ENCODE measurements at regions of chr14 and their contacts with region 1.

Region 1: DNA sequence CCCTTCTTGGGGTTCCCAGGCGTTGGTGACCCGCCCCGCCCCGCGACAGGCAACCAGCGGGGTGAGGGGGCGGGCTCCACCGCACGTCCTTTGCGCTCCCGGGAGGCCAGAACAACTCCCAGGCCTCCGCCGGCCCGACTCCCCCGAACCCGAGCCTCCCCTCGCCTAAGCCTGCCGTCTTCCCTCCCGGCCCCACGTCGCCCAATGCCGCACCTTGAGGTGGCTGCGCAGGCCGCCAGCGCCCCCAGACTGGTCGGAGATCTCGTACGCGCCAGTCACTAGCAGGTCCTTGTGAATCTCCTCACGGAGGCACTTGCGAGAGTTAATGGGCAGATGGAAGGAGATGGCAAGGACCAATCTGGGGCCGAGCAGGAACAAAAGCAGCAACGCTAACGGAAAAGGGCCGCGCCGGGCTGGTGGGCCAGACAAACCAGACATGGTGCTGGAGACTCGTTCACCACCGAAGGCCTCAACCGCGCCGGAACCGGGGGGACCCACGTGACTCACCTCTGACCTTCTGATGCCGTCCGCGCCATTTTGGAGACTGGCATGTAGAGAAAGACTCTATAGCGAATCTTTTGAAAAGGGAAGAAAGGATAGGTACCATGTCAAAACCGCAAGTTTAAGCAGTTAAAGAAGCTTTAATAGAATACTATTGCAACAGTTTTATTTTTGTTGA is at the start of gene TMED10:
- DNase-seq: peak; percentile 85 to 95 (median 93)
- ATAC-seq: peak; percentile 76
- H3K4me3 ChIP-seq: peak within 1 kb of the TSS; percentile 80 to 94
- H3K4me3 Mint-ChIP-seq: peak within 1 kb of the TSS; percentile 91
- H3K27ac ChIP-seq: peak within 1 kb of the TSS; percentile 98
- H3K27ac Mint-ChIP-seq: peak within 1 kb of the TSS; percentile 98
- H3K4me1 ChIP-seq: peaks cover 23% of the 10 kb centered on the region
- H3K4me1 Mint-ChIP-seq: peaks cover 44% of the 10 kb centered on the region
- H3K27me3 ChIP-seq: no peaks in the 10 kb centered on the region
- H3K27me3 Mint-ChIP-seq: no peaks in the 10 kb centered on the region
- CTCF ChIP-seq: no peak
- total RNA-seq, gene TMED10: 126 to 129 TPM

Region 2: GRCh38 chr14:74712499-74713394 is 463.5 kb before region 1 on chr14 and contains the starts of genes AREL1 and FCF1:
- CTCF ChIA-PET with region 1: no interaction called
- POLR2A ChIA-PET with region 1: no interaction called
- intact Hi-C with region 1: loop called in 1 of 2 experiments (anchors 5 kb)
- DNase-seq: peak; percentile 56 to 94 (median 80)
- ATAC-seq: peak; percentile 93
- H3K4me3 ChIP-seq: peak within 1 kb of the TSS; percentile 63 to 87
- H3K4me3 Mint-ChIP-seq: peak within 1 kb of the TSS; percentile 98
- H3K27ac ChIP-seq: peak within 1 kb of the TSS; percentile 78 to 93
- H3K27ac Mint-ChIP-seq: peak within 1 kb of the TSS; percentile 99
- H3K4me1 ChIP-seq: peaks cover 24% of the 10 kb centered on the region
- H3K4me1 Mint-ChIP-seq: peaks cover 65% of the 10 kb centered on the region
- H3K27me3 ChIP-seq: no peaks in the 10 kb centered on the region
- H3K27me3 Mint-ChIP-seq: no peaks in the 10 kb centered on the region
- CTCF ChIP-seq: no peak
- total RNA-seq, gene AREL1: 44.5 to 60.1 TPM
- total RNA-seq, gene FCF1: 32.6 to 34.0 TPM

Region 3: DNA sequence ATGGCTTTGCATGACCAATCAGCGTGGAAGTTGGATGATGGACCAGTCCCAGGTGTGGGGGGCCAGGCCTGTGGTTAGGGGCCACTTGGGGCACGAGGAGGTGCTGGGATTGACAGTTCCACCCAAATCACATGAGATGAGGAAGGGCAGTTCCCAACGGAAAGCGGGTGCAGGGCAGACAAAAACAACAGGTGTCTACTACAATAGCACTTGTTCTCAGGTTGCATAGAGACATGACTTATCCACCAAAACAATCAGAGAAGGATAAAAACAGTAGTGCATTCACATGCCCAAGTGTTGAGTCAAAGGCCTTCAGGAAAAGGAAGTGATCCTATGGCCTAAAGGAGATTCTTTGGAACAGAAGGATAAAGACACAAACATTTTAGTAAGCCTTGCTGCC is 188.2 kb before region 1 on chr14:
- CTCF ChIA-PET with region 1: no interaction called
- POLR2A ChIA-PET with region 1: no interaction called
- intact Hi-C with region 1: no loop called
- DNase-seq: no peak
- ATAC-seq: no peak
- H3K4me3 ChIP-seq: no peak overlapping the region
- H3K4me3 Mint-ChIP-seq: no peak overlapping the region
- H3K27ac ChIP-seq: no peak overlapping the region
- H3K27ac Mint-ChIP-seq: no peak overlapping the region
- H3K4me1 ChIP-seq: no peaks in the 10 kb centered on the region
- H3K4me1 Mint-ChIP-seq: no peaks in the 10 kb centered on the region
- H3K27me3 ChIP-seq: no peaks in the 10 kb centered on the region
- H3K27me3 Mint-ChIP-seq: no peaks in the 10 kb centered on the region
- CTCF ChIP-seq: no peak

Region 4: GRCh38 chr14:75094896-75095295 is 81.4 kb before region 1 on chr14:
- CTCF ChIA-PET with region 1: no interaction called
- POLR2A ChIA-PET with region 1: no interaction called
- intact Hi-C with region 1: no loop called
- DNase-seq: no peak
- ATAC-seq: no peak
- H3K4me3 ChIP-seq: no peak overlapping the region
- H3K4me3 Mint-ChIP-seq: no peak overlapping the region
- H3K27ac ChIP-seq: no peak overlapping the region
- H3K27ac Mint-ChIP-seq: no peak overlapping the region
- H3K4me1 ChIP-seq: no peaks in the 10 kb centered on the region
- H3K4me1 Mint-ChIP-seq: no peaks in the 10 kb centered on the region
- H3K27me3 ChIP-seq: no peaks in the 10 kb centered on the region
- H3K27me3 Mint-ChIP-seq: no peaks in the 10 kb centered on the region
- CTCF ChIP-seq: no peak

Region 5: DNA sequence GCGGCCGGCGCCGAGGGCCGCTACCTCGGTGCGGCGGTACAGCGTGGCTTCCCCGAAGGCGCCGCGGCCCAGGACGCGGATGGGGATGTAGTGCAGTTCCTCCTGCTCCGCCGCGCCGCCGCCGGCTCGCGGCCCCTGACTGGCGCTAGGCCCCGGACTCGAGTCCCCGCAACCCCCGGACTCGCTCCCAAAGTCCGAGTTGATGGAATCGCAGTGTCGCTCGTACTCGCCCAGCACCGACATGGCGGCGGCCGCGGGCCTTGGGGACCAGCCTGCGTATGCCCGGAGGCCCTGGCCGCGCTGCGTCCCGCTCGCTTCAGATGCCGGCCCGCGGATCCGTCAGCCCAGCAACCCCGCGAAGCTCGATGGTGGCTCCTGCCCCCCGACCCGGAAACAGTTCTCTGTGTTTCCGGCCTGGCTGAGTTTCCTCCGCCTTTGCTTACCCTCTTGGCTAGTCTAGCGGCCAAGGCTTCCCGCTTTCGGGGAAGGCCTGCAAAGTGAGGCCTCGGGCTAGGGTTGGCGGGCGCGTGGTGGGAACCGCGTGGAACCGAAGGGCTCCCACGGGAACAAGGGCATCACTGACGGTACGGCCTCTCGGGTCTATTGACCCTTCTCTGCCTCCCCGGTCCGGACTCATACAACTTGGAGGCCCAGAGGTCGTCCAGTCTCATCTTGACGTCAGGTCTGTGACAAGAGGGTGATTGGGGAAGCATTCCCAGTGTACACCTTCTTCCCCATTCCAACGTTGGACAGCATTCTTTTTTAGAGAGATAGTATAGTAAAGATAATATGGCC is 49.4 kb before region 1 on chr14 and contains the start of gene NEK9:
- CTCF ChIA-PET with region 1: no interaction called
- POLR2A ChIA-PET with region 1: interaction called, 4 read pairs
- intact Hi-C with region 1: loop called (anchors 1 kb)
- DNase-seq: peak; percentile 77 to 93 (median 89)
- ATAC-seq: peak; percentile 82
- H3K4me3 ChIP-seq: peak within 1 kb of the TSS; percentile 87 to 95
- H3K4me3 Mint-ChIP-seq: peak within 1 kb of the TSS; percentile 95
- H3K27ac ChIP-seq: peak within 1 kb of the TSS; percentile 87 to 92
- H3K27ac Mint-ChIP-seq: peak within 1 kb of the TSS; percentile 98
- H3K4me1 ChIP-seq: peaks cover 23% of the 10 kb centered on the region
- H3K4me1 Mint-ChIP-seq: peaks cover 46% of the 10 kb centered on the region
- H3K27me3 ChIP-seq: no peaks in the 10 kb centered on the region
- H3K27me3 Mint-ChIP-seq: no peaks in the 10 kb centered on the region
- CTCF ChIP-seq: no peak
- total RNA-seq, gene NEK9: 40.7 to 42.9 TPM

Region 6: GRCh38 chr14:75230140-75231045 is 54.1 kb after region 1 on chr14:
- CTCF ChIA-PET with region 1: no interaction called
- POLR2A ChIA-PET with region 1: interaction called, 4 read pairs
- intact Hi-C with region 1: loop called in 1 of 2 experiments (anchors 5 kb)
- DNase-seq: peak; percentile 25 to 93 (median 56)
- ATAC-seq: peak; percentile 75
- H3K4me3 ChIP-seq: no peak overlapping the region
- H3K4me3 Mint-ChIP-seq: peak overlapping the region; percentile 24
- H3K27ac ChIP-seq: peak overlapping the region in 1 of 2 experiments; percentile 55
- H3K27ac Mint-ChIP-seq: peak overlapping the region; percentile 81
- H3K4me1 ChIP-seq: peaks cover 41% of the 10 kb centered on the region
- H3K4me1 Mint-ChIP-seq: peaks cover 51% of the 10 kb centered on the region
- H3K27me3 ChIP-seq: no peaks in the 10 kb centered on the region
- H3K27me3 Mint-ChIP-seq: no peaks in the 10 kb centered on the region
- CTCF ChIP-seq: peak; percentile 35

Region 7: DNA sequence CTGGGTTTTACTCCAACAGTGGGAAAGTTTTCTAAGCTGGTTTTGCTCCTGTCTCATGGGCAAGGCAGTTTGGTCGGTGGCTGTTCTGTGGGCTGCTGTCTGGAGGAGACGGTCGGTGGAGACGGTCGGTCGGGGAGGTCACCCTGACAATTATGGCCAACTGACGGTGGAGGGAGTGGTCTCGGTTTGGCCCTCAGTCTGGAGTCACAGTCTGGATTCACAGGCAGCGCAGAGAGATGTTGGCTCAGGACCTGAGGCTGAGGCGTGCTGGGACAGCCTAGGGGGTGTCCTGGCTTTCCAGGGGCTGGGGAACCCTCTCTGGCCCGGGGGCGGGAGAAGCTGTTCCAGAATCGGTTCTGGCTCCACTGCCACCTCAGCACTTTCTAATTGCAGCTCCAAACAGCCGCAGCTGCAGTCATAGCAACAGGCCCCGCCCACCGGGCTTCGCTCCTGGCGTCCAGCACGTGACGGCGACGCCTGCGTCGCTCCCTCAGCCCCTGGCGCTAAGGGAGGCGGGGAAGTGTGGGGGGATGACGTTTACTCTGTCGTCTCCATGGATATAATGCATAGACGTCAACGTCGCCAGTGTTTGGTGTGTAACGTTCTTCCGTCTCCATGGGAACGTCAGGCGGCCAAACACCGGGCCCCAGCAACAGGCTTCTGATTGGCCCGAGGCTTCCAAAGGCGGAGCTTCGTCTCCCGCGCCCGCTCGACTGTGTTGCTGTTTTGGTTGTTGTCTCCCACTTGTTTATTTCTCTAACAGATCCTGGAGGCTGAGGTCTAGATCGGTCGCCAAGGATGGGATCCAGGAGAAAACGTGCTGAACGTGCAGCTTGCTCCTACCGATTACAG is 82.6 kb after region 1 on chr14:
- CTCF ChIA-PET with region 1: interaction called, 3 read pairs
- POLR2A ChIA-PET with region 1: interaction called, 3 read pairs
- intact Hi-C with region 1: loop called (anchors 1 kb)
- DNase-seq: peak; percentile 97 to 100 (median 100)
- ATAC-seq: peak; percentile 89
- H3K4me3 ChIP-seq: peak overlapping the region; percentile 45 to 54
- H3K4me3 Mint-ChIP-seq: peak overlapping the region; percentile 82
- H3K27ac ChIP-seq: peak overlapping the region; percentile 92 to 98
- H3K27ac Mint-ChIP-seq: peak overlapping the region; percentile 97
- H3K4me1 ChIP-seq: peaks cover 17% of the 10 kb centered on the region
- H3K4me1 Mint-ChIP-seq: peaks cover 29% of the 10 kb centered on the region
- H3K27me3 ChIP-seq: no peaks in the 10 kb centered on the region
- H3K27me3 Mint-ChIP-seq: no peaks in the 10 kb centered on the region
- CTCF ChIP-seq: no peak

Region 8: DNA sequence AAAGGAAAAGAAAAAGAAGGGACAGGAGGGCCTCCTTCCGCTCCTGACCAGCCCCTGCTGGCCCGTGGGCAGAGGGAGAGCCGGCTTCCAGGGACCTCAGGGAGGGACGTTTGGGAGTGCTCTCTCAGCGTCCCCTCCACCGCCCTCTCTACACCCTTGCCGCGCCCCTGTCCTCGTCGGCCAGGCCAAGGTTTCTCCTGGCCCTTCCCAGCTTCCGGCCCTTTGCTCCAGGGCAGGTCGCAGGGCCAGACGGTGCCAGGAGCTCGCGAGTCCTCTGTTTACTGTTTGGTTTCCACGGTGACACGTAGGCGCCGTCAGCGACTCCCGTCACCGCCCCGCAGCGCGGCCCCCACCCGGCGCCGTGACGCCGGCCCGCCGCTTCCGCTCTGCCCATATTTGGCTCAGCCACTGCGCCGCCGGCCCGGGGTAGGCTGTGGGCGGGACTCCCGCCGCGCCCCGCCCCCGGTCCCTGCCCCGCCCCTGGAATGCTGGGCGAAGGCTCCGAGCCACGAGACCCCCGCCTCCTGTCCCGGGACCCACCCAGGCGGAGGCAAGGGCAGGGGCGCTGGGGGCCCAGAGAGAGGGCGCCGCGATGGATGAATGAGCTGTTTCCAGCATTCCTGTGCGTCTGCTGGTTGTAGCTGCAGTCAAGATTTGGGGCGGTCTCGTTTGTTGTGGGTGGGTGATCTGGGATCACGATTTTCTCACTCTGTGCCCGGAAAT is 117.8 kb after region 1 on chr14:
- CTCF ChIA-PET with region 1: interaction called, 3 read pairs
- POLR2A ChIA-PET with region 1: interaction called, 8 read pairs
- intact Hi-C with region 1: loop called in 1 of 2 experiments (anchors 1 kb)
- DNase-seq: peak; percentile 90 to 99 (median 94)
- ATAC-seq: peak; percentile 87
- H3K4me3 ChIP-seq: peak overlapping the region; percentile 31 to 62
- H3K4me3 Mint-ChIP-seq: peak overlapping the region; percentile 88
- H3K27ac ChIP-seq: peak overlapping the region; percentile 95 to 99
- H3K27ac Mint-ChIP-seq: peak overlapping the region; percentile 93
- H3K4me1 ChIP-seq: peaks cover 23% of the 10 kb centered on the region
- H3K4me1 Mint-ChIP-seq: peaks cover 23% of the 10 kb centered on the region
- H3K27me3 ChIP-seq: peaks cover 0 to 2% of the 10 kb centered on the region in 2 experiments
- H3K27me3 Mint-ChIP-seq: no peaks in the 10 kb centered on the region
- CTCF ChIP-seq: no peak